Heart left ventricle (tissue), 16 donors: ENCODE measurements at regions of chr11 and their contacts with region 1.

Region 1: DNA sequence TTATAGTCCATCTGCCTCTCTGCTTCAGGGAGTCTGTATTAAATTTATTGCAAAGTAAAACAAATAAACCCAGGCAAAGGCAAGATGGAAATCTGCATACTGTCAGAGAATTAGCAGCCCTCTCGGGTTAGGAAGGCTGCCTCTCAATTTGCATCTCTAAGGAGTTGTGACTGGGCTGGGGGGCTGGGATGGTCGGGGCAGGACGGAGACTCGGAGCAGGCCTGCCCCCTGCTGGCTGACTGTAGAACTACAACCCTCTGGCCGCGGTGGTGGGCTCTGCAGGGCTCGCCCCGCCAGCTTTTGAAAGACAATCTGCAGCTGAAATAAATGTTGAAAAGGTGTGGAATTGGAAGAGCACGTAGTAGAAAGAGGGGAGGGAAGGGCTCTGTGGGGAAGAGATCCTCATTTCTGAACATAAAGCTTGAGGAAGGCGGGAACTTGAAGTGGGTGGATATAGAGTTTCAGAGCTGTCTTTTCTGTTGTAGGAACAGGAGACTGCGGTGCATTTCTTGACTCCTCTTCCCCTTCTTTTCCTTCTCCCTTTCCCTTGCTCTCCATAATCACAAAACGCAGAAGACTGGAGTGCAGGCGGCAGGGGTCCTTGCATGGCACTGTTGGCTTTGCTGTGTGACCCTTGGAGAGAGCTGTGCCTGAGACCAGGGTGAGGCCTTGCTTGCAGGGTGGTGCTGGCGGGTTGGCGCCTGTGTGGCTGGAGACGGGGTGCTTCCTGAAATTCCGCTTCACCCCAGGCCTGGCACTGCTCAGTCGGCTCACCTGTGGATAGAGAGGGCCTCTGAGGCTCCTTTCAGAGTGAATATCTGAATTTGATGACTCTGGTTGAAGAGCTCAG is 22.6 kb upstream of the PKNOX2 start:
- DNase-seq: peak; percentile 30 to 66 (median 52)
- ATAC-seq: peak in 3 of 4 donors; percentile 76 to 83 (median 79)
- H3K4me3 ChIP-seq: no peak overlapping the region
- H3K27ac ChIP-seq: no peak overlapping the region
- H3K4me1 ChIP-seq: peaks cover 0 to 6% (median 0%) of the 10 kb centered on the region in 12 donors
- H3K27me3 ChIP-seq: peaks cover 0 to 26% (median 11%) of the 10 kb centered on the region in 9 donors
- CTCF ChIP-seq: peak; percentile 84 to 98 (median 94)
- POLR2A ChIP-seq: no peak

Region 2: GRCh38 chr11:124961972-124962609 is 179.8 kb before region 1 on chr11:
- intact Hi-C with region 1: loop called (anchors 2 to 10 kb)
- DNase-seq: no peak
- ATAC-seq: peak in 3 of 4 donors; percentile 81 to 85 (median 83)
- H3K4me3 ChIP-seq: no peak overlapping the region
- H3K27ac ChIP-seq: no peak overlapping the region
- H3K4me1 ChIP-seq: peaks cover 0 to 3% (median 0%) of the 10 kb centered on the region in 12 donors
- H3K27me3 ChIP-seq: no peaks in the 10 kb centered on the region
- CTCF ChIP-seq: peak; percentile 55 to 78 (median 70)
- POLR2A ChIP-seq: no peak

Region 3: DNA sequence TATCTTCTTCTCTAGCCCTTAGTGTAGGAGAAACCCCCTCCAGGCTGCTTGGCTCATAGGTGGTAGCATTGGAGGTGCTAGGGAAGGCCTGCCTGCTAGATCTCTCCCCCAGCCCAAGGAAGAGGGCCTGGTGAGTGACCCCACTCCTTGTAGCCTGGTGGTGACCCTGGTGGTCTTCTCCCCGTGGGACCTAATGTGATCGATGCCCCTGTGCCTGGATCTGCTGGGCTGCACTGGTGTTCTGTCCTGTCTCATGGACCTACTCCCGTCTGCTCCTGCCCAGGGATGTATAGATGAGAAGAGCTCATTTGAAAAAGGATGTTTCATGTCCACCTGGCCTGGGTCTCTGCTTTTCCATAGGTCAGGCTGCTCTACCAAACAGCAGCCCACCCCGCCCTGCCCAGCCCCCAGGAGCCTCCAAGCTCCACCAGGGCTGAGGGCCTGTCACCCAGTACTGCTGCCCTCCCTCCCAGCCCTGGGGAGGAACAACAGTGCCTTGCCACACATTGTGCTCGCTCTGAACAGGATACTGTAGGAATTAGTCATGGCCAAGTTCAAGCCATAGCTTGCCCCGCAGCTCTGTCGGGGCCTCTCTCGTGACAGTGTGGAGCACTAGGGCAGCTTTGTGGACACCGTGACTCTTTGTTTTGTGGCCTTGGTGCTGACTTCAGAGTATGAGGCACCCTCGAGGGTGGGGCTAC is 59.1 kb before region 1 on chr11:
- intact Hi-C with region 1: no loop called
- DNase-seq: no peak
- ATAC-seq: peak in 1 of 4 donors; percentile 15
- H3K4me3 ChIP-seq: no peak overlapping the region
- H3K27ac ChIP-seq: no peak overlapping the region
- H3K4me1 ChIP-seq: no peaks in the 10 kb centered on the region
- H3K27me3 ChIP-seq: peaks cover 0 to 16% (median 0%) of the 10 kb centered on the region in 9 donors
- CTCF ChIP-seq: no peak
- POLR2A ChIP-seq: no peak

Region 4: GRCh38 chr11:125114518-125114917 is 27.4 kb before region 1 on chr11:
- intact Hi-C with region 1: no loop called
- DNase-seq: no peak
- ATAC-seq: no peak
- H3K4me3 ChIP-seq: no peak overlapping the region
- H3K27ac ChIP-seq: no peak overlapping the region
- H3K4me1 ChIP-seq: peaks cover 0 to 17% (median 7%) of the 10 kb centered on the region in 12 donors
- H3K27me3 ChIP-seq: peaks cover 0 to 5% (median 0%) of the 10 kb centered on the region in 9 donors
- CTCF ChIP-seq: no peak
- POLR2A ChIP-seq: no peak

Region 5: GRCh38 chr11:126146433-126147192 is 1004.7 kb after region 1 on chr11:
- intact Hi-C with region 1: no loop called
- DNase-seq: no peak
- ATAC-seq: no peak
- H3K4me3 ChIP-seq: no peak overlapping the region
- H3K27ac ChIP-seq: no peak overlapping the region
- H3K4me1 ChIP-seq: peaks cover 0 to 8% (median 0%) of the 10 kb centered on the region in 12 donors
- H3K27me3 ChIP-seq: no peaks in the 10 kb centered on the region
- CTCF ChIP-seq: no peak
- POLR2A ChIP-seq: no peak